Tibial artery (tissue), 4 donors: ENCODE measurements at regions of chr16 and their contacts with region 1.

Region 1: DNA sequence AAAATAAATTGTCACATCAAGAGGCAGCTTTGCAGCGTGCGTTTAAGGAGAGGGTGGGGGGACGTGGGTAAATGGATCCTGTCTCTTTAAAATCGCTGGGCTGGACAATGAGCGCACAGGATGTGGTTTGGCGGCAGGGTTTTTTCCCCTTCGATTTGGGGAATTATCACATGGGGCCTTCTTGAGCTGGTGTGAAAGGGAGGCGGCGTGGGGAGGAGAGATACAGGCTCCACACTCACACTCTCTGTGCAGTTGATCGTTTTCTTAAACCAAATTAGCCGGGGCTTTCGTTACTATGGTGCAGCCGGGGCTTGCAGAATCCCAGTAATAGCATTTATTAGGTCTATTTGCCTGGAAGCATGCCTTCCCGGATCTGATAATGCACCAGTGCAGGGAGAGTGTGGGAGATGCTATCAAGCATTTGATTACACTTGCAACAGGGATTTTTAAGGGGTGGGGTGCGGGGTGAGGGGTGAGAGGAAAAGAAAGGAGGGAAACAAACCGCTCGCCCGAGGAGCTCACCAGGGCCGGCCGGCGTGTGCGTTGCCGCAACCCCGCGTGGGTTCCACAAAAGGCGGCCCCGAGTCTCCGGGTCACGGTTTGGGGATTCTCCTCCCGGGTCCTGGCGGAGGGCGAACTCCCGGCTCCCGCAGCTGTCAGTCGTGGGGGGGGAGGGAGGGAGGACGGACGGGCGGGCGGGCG is 58.9 kb upstream of the GSE1 start:
- DNase-seq: peak; percentile 84 to 91
- H3K4me3 ChIP-seq: peak overlapping the region; percentile 90 to 91
- H3K27ac ChIP-seq: peak overlapping the region; percentile 87 to 95
- H3K4me1 ChIP-seq: peaks cover 0 to 62% (median 28%) of the 10 kb centered on the region in 4 donors
- H3K27me3 ChIP-seq: no peaks in the 10 kb centered on the region
- CTCF ChIP-seq: no peak

Region 2: DNA sequence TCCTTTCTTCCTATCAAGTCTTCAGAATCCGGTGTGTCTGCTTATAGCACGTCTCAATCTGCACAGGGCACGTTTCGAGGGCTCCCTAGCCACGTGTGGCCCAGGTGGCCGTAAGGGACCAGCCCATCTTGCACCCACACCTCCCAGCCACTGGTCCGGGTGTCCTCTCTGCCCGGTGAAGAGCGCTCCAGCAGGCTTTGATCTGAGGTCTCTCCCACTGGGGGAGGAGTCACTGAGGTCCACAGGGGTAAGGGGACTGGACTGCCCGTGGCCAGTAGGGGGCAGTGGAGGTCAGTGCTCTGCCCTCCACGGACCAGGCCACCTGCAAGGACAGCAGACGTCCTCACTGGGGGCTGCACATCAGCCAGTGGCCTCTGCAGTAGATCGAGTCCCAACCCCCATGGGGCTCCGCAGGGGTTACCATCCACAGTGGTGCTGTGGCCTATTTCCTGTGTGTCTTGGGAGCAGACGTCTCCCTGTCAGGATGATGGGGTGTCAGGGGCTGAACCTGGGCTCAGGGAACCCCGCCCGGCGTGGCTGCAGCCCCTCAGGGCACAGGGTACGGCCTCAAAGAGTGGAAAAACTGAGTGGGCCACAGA is 237.8 kb before region 1 on chr16:
- intact Hi-C with region 1: loop called (anchors 10 kb)
- DNase-seq: peak in 1 of 2 donors; percentile 77
- H3K4me3 ChIP-seq: no peak overlapping the region
- H3K27ac ChIP-seq: peak overlapping the region in 1 of 2 donors; percentile 14
- H3K4me1 ChIP-seq: peaks cover 0 to 40% (median 29%) of the 10 kb centered on the region in 4 donors
- H3K27me3 ChIP-seq: peaks cover 0 to 4% of the 10 kb centered on the region in 2 donors
- CTCF ChIP-seq: peak; percentile 82

Region 3: GRCh38 chr16:85514595-85515318 is 39.5 kb before region 1 on chr16:
- intact Hi-C with region 1: loop called (anchors 5 kb)
- DNase-seq: peak; percentile 84 to 95
- H3K4me3 ChIP-seq: peak overlapping the region; percentile 1 to 15
- H3K27ac ChIP-seq: peak overlapping the region; percentile 73 to 81
- H3K4me1 ChIP-seq: peaks cover 7 to 36% (median 30%) of the 10 kb centered on the region in 4 donors
- H3K27me3 ChIP-seq: no peaks in the 10 kb centered on the region
- CTCF ChIP-seq: peak in 1 of 2 experiments; percentile 10

Region 4: GRCh38 chr16:85593494-85594221 is 39.4 kb after region 1 on chr16:
- intact Hi-C with region 1: loop called (anchors 1 kb)
- DNase-seq: no peak
- H3K4me3 ChIP-seq: no peak overlapping the region
- H3K27ac ChIP-seq: no peak overlapping the region
- H3K4me1 ChIP-seq: peaks cover 0 to 21% (median 0%) of the 10 kb centered on the region in 4 donors
- H3K27me3 ChIP-seq: no peaks in the 10 kb centered on the region
- CTCF ChIP-seq: no peak